ENCODE measurements at regions of chrX and their contacts with region 1.

Region 1: DNA sequence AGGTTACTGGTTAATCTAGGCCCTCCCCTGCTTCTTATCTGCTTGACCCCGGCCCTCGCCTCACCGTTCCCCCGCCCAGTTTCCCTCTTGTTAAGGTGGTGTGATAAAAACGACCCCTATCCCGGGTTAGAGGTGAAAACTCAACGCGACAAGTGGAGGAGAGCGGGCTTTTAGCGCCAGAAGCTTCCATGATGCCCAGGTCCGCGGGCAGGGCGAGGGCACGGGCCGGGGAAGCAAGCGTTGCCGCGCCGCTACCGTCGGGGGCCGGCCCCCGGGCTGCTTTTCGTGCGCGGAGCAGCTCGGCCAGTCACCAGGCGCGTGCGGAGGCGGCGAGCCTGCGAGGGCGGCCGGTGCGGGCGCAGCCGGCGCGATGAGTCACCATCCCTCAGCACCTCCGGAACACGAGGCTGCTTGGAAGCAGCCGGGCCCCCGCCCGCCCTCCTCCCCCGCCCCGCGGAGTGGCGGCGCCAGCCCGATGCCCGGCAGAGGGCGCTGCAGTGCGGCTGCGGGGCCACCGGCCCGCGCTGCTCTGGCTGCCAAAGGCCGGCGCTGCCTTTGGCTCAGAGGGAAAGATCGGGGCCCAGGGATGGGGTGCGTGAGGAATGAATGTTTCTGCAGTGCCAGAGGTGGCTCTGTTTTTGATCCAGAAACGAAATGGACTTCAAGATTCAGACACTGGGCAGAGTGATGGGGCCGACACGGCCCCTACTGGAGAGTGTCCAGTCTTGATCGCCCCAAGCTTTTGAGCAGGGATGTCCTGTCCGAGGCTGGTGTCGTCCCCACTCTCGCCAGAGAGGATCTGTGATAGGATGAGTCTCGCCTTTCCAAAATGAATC is 107.8 kb downstream of the NHSL2 start:
- DNase-seq: peak; percentile 90
- H3K4me3 ChIP-seq: no peak overlapping the region
- H3K27ac ChIP-seq: peak overlapping the region; percentile 32
- H3K4me1 ChIP-seq: peaks cover 10% of the 10 kb centered on the region
- H3K27me3 ChIP-seq: no peaks in the 10 kb centered on the region
- CTCF ChIP-seq: peak; percentile 39 to 57
- POLR2A ChIP-seq: no peak

Region 2: DNA sequence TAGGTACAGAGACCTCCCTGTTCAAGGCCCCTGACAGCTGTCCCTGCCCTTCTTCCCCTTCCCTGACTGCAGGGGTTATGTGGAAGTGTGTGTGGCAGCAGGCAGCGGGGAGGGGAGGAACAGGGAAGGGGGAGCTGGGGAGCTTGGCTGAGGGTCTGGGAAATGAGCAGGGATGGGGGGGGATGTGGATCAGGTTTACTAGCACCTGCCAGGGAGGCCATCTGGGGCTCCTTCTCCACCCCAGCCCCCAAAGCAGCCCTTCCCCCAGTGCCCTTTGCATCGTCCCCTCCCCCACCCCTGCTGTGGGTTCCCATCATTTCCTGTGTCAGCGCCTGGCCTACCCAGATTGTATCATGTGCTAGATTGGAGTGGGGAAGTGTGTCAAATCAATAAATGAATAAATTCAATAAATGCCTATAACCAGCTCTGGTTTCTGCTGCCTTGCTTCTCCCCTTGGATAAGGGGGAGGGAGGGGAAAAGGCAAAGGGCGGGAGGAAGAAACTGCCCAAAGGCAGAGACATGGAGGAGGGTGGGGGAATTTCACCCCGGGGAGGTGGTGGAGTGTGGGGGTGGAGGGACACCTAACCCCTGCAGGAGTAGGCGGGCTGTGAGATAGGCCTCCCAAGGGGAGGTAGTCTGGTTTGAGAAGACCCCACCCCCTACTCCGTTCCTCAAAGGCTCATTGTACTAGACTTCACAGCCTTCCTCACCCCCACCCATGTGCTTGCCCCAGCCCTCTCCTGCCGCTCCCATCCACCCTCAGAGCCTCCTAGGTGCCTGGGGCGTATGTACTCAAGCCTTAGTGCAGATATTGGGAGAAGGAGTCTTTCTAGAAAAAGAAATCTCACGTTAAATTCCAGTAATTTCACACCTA is 915.1 kb before region 1 on chrX:
- CTCF ChIA-PET with region 1: no interaction called
- POLR2A ChIA-PET with region 1: no interaction called
- dilution Hi-C with region 1: no loop called
- intact Hi-C with region 1: no loop called
- DNase-seq: no peak
- H3K4me3 ChIP-seq: no peak overlapping the region
- H3K27ac ChIP-seq: no peak overlapping the region
- H3K4me1 ChIP-seq: no peaks in the 10 kb centered on the region
- H3K27me3 ChIP-seq: no peaks in the 10 kb centered on the region
- CTCF ChIP-seq: no peak
- POLR2A ChIP-seq: no peak

Region 3: DNA sequence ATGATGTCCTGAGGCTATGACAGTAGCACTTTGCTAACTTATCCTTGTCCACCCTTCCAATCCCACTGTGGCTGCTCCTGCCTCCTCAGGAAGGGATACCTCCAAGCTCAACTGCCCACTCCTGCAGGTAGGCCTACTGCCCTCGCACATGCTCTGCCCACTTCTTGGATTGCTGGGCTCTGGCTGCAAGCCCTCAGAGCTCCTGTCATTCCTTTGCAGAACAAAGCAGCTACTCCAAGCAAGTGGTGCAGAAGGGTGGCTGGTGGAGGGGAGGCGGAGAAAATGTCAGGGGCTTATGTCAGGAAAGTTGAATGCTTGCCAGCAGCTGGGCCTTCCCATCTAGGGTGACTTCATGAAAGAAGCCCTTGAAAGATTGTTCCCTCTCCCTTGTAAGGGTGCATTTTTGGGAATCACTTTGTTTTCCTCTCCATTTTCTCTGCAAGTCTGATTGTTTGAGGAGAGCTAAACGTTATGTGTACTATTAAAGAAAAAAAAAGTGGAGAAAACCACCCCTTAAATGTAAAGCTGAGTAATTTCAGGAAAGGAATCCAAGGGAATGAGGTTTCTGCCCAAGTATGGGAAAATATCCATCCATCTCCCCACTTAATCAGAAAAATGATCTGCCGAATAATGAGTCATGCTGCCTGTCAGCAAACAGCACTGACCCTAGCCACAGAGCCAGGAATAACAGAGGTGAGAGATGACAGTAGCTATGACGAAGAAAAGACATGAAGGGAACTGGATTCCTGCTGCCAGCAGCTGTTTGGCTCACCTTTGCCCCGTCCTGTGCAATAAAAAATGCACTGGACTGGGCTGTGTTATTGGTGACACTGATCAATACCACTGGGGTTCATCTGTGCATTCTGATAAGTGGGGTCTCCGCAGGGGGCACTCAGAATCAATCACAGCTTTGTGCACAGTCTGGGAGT is 11.3 kb after region 1 on chrX:
- CTCF ChIA-PET with region 1: interaction called, 12 read pairs
- POLR2A ChIA-PET with region 1: no interaction called
- dilution Hi-C with region 1: no loop called
- intact Hi-C with region 1: no loop called
- DNase-seq: peak; percentile 89
- H3K4me3 ChIP-seq: no peak overlapping the region
- H3K27ac ChIP-seq: peak overlapping the region; percentile 52
- H3K4me1 ChIP-seq: peaks cover 23% of the 10 kb centered on the region
- H3K27me3 ChIP-seq: no peaks in the 10 kb centered on the region
- CTCF ChIP-seq: no peak
- POLR2A ChIP-seq: no peak

Region 4: GRCh38 chrX:72094894-72095293 is 76.4 kb after region 1 on chrX:
- CTCF ChIA-PET with region 1: interaction called, 12 read pairs
- POLR2A ChIA-PET with region 1: no interaction called
- dilution Hi-C with region 1: no loop called
- intact Hi-C with region 1: no loop called
- DNase-seq: peak; percentile 90
- H3K4me3 ChIP-seq: no peak overlapping the region
- H3K27ac ChIP-seq: peak overlapping the region; percentile 78
- H3K4me1 ChIP-seq: peaks cover 18% of the 10 kb centered on the region
- H3K27me3 ChIP-seq: no peaks in the 10 kb centered on the region
- CTCF ChIP-seq: no peak
- POLR2A ChIP-seq: no peak

Region 5: DNA sequence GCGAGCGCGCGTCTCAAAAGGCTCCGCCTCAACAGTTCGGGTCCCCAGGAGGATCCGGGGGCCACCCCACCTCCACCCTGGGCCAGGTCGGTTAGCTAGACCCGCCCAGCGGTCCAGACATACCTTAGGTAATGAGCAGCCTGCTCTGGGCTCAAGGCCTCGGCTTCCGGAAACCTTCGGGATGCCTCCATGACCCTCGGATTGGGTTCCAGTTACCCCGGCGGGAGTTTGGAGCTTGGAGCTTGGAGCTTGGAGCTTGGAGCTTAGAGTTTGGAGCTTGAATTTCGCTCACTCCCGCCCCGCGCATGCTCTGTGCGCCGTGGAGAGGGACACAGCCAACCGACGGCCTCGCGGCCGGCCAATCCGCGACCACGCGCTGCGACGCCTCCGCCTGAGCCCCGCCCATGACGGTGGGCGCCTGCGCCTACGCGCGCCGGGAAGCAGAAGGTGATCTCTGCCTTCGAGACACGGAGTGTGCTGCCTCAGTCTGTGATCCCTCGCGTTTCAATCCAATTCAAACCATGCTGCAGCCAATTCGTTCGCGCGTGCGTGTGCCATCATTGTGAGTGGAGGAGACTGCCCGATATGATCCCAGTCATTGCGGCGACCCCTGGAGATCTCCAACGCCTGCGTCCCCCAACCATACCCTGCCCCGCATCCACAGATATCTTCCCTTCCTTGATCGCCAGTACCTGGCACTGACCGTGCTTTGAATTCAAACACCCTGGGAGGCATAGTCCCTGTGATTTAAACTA is 220.4 kb after region 1 on chrX and contains the start of gene ERCC6L:
- CTCF ChIA-PET with region 1: no interaction called
- POLR2A ChIA-PET with region 1: no interaction called
- dilution Hi-C with region 1: no loop called
- intact Hi-C with region 1: no loop called
- DNase-seq: peak; percentile 89
- H3K4me3 ChIP-seq: peak within 1 kb of the TSS; percentile 35 to 82 (median 63)
- H3K27ac ChIP-seq: peak within 1 kb of the TSS; percentile 55
- H3K4me1 ChIP-seq: peaks cover 9% of the 10 kb centered on the region
- H3K27me3 ChIP-seq: no peaks in the 10 kb centered on the region
- CTCF ChIP-seq: no peak
- POLR2A ChIP-seq: peak; percentile 80
- total RNA-seq, gene ERCC6L: 6.7 and 7.5 TPM in 2 replicates